ENCODE measurements at regions of chr4 and their contacts with region 1.

Region 1: DNA sequence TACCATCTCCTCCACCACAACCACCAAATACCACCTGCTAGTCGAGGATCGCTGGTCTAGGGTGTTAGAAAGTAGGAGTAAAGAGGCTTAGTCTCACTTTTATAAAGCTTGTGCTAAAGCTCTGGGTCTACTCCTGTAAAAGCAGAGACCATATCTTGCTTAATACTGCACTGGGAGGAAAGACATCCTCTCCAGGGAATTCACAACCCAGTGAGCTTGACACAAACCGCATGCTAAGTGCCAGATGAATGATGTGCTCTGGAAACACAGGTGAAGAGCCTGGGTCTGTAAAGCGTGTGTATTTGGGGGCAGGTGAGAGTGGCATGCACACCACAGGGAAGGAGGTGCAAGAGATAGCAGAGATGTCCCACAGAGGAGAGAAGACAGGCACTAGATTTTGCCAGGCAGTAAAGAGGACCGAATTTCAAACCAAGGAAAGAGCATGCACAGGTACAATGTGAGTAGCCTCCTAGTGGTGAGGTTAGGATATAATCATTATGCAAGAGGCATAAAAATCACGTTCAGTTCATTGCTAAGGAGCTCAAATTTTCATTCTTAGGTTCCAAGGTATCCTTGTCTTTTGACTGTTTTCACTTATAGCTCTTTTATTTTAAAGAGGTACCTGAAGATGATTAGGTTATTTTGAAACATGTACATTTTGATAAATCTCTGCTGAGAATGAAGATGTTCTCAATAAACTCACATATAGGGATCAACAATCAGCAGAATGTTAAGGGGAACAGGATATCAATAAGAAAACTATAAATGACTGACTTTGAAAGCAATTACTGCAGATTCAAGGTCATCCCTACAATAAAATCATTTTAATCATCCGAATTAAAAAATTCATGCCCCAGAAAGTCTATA is 20.7 kb downstream of the TAPT1 start:
- DNase-seq: peak in 2 of 9 experiments; percentile 33 to 56
- ATAC-seq: peak; percentile 92
- H3K4me3 ChIP-seq: no peak overlapping the region
- H3K4me3 Mint-ChIP-seq: no peak overlapping the region
- H3K27ac ChIP-seq: no peak overlapping the region
- H3K27ac Mint-ChIP-seq: peak overlapping the region; percentile 46
- H3K4me1 ChIP-seq: peaks cover 17% of the 10 kb centered on the region
- H3K4me1 Mint-ChIP-seq: peaks cover 38% of the 10 kb centered on the region
- H3K27me3 ChIP-seq: no peaks in the 10 kb centered on the region
- H3K27me3 Mint-ChIP-seq: no peaks in the 10 kb centered on the region
- CTCF ChIP-seq: peak; percentile 70

Region 2: DNA sequence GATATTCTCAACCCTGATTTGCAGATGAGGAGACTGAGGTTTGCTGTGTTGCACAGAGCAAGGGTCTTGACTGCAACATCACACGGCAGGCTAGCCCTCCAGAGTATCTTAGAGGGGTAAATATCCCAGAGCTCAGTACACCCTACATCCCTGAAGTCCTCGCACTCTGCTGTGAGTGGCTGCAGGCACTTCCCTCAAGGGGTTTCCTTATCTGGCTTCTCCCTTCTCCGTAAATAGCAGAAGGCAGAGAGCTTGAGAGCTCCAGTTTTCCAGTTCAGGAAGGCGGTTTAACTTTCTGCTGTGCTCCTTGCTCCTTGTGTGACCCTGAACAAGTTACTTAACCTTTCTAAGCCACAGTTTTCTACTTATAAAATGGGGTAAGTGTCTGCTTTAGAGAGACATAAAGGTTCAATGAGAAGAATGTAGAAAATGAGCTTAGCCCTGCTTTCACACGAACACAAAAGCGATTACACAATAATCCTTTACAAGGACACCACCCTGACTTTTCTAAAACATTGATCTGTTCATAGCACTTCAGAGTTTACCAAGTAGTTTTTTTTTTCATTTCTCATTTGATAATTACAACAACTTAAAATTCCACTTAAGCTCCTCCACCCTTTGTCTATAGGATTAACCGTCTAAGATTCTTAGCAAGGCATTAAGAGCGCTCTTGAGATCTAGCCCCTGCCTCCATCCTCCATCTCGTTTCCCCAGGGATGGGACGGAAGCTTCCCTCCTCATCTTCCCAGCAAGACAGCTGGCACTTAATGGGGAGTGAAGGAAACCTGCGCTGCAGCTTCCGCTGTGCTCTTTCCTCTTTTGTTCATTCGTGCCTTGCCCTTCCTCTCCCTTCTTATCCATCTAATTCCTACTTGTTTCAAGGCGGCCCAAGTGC is 47.7 kb before region 1 on chr4:
- CTCF ChIA-PET with region 1: no interaction called
- POLR2A ChIA-PET with region 1: no interaction called
- intact Hi-C with region 1: no loop called
- DNase-seq: no peak
- ATAC-seq: no peak
- H3K4me3 ChIP-seq: no peak overlapping the region
- H3K4me3 Mint-ChIP-seq: no peak overlapping the region
- H3K27ac ChIP-seq: no peak overlapping the region
- H3K27ac Mint-ChIP-seq: peak overlapping the region; percentile 16
- H3K4me1 ChIP-seq: no peaks in the 10 kb centered on the region
- H3K4me1 Mint-ChIP-seq: peaks cover 4% of the 10 kb centered on the region
- H3K27me3 ChIP-seq: no peaks in the 10 kb centered on the region
- H3K27me3 Mint-ChIP-seq: no peaks in the 10 kb centered on the region
- CTCF ChIP-seq: no peak

Region 3: GRCh38 chr4:16217300-16218051 is 11.9 kb after region 1 on chr4:
- CTCF ChIA-PET with region 1: interaction called, 6 read pairs
- POLR2A ChIA-PET with region 1: interaction called, 4 read pairs
- intact Hi-C with region 1: loop called in 1 of 2 experiments (anchors 2 kb)
- DNase-seq: no peak
- ATAC-seq: no peak
- H3K4me3 ChIP-seq: no peak overlapping the region
- H3K4me3 Mint-ChIP-seq: peak overlapping the region; percentile 29
- H3K27ac ChIP-seq: no peak overlapping the region
- H3K27ac Mint-ChIP-seq: peak overlapping the region; percentile 4
- H3K4me1 ChIP-seq: peaks cover 62% of the 10 kb centered on the region
- H3K4me1 Mint-ChIP-seq: peaks cover 78% of the 10 kb centered on the region
- H3K27me3 ChIP-seq: no peaks in the 10 kb centered on the region
- H3K27me3 Mint-ChIP-seq: no peaks in the 10 kb centered on the region
- CTCF ChIP-seq: no peak